ENCODE measurements at regions of chr12 and their contacts with region 1.

Region 1: DNA sequence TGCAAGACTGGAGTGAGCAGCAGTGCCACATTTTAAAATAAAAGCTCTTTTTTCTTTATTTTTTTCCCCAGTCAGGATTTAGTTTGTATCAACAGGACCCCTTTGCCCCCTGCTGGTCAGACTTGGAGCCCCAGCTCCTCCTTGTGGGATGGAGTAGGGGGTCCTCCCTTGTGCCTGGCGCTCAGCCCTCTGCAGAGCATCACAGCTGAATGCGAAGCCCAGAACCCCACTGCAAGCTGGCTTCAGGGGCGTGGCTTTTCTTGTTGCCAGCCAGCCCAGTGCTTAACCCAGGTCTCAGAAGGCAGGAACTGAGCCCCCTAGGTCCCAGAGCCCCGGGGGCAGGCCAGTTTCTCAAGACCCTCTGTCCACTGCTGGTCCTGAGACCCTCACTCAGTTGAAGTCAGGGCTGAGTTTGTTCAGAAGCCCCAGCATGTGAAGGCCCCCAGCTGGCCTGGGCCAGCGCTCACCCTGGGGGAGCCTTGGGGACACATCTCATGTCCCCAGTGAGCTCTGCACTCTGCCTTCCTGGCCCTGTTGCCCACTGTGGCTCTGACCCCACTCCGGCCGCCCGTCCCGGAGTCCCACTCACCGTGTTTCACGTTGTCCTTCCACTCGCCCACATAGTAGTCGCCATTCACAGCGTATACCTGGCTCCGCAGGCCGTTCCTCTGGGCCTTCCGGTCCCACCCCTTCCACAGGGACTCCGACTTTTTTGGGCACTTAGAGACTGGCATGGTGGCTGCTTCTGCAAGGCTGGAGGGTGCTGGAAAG is 519 bp downstream of the MORN3 start:
- DNase-seq: peak in 1 of 2 experiments; percentile 80
- H3K4me3 ChIP-seq: no peak overlapping the region
- H3K27ac ChIP-seq: no peak overlapping the region
- H3K4me1 ChIP-seq: peaks cover 0 to 18% (median 7%) of the 10 kb centered on the region in 4 experiments; a peak in 6 of 7 replicates
- H3K27me3 ChIP-seq: no peaks in the 10 kb centered on the region
- CTCF ChIP-seq: peak; percentile 52 to 62 (median 53)
- EP300 ChIP-seq: no peak
- POLR2A ChIP-seq: no peak
- RAD21 ChIP-seq: peak; percentile 52 to 70

Region 2: DNA sequence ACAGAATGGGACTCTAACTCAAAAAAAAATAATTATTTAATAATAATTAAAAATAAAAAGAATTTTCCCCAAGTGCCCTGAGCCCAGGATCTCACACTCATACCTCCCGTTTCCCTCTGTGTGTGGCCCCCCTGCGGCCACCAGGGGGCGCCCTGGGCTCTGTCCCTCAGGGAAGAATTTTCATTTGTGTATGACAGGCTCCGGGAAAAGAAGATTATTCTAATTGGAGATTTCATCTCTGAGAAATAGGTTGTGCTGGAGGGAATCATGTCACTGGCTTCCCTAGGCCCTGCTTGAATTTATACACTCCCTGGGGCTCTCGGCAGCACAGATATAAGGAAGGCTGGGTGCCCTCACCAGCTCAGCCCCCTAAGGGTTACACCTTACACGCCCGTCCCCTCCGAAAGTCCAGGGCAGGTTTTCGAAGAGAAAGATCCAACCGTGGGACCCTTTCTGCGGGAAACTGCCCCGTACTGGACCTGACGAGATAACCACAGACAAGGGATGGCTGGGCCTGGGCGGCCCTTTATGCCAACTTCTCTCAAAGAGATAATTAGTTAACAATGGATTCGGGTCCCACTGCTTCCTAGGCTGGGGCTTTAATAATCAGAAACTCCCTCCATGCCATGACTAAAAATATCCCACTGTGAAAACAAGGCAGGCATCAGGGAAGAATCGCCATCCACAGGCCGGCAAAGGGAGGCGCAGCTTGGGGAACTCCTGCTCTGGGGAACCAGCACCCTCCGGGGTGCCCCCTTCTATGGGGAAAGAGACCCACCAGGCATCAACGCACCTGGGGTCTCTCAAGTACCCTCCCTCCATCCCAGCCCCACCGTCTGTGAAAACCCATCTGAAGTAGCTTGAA is 168.8 kb before region 1 on chr12:
- CTCF ChIA-PET with region 1: interaction called, 13 read pairs
- POLR2A ChIA-PET with region 1: no interaction called
- DNase-seq: peak in 1 of 2 experiments; percentile 88
- H3K4me3 ChIP-seq: no peak overlapping the region
- H3K27ac ChIP-seq: 0 out of 2 replicates have a peak overlapping the region, but pooled peaks have one; percentile 16
- H3K4me1 ChIP-seq: no peaks in the 10 kb centered on the region
- H3K27me3 ChIP-seq: no peaks in the 10 kb centered on the region
- CTCF ChIP-seq: peak; percentile 63 to 84 (median 80)
- EP300 ChIP-seq: no peak
- POLR2A ChIP-seq: no peak
- RAD21 ChIP-seq: peak; percentile 49 to 63

Region 3: GRCh38 chr12:121637231-121637914 is 31.6 kb before region 1 on chr12:
- CTCF ChIA-PET with region 1: interaction called, 17 read pairs
- POLR2A ChIA-PET with region 1: interaction called, 4 read pairs
- DNase-seq: no peak
- H3K4me3 ChIP-seq: no peak overlapping the region
- H3K27ac ChIP-seq: no peak overlapping the region
- H3K4me1 ChIP-seq: peaks cover 2 to 10% (median 8%) of the 10 kb centered on the region in 4 experiments; a peak in 6 of 7 replicates
- H3K27me3 ChIP-seq: no peaks in the 10 kb centered on the region
- CTCF ChIP-seq: no peak
- EP300 ChIP-seq: no peak
- POLR2A ChIP-seq: no peak
- RAD21 ChIP-seq: no peak

Region 4: DNA sequence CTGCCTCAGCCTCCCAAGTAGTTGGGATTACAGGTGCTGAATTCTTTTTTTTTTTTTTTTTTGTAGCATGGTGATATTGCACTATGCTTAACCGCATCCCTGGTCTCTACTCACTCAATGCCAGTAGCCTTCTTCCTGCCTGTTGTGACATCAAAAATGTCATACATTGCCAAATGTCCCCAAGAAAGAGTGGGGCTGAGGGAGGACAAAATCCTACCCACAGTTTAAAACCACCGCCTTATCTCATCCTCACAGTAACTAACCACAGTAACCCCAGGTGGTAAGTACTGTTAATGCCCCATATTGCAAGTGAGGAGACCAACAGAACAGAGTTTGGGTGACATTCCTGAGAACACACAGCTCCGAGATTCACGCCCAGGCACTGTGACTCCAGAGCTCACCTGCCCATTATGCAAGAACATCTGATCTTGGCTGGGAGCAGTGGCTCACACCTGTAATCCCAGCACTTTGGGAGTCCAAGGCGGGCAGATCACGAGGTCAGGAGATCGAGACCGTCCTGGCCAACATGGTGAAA is 19.0 kb before region 1 on chr12:
- CTCF ChIA-PET with region 1: interaction called, 16 read pairs
- POLR2A ChIA-PET with region 1: interaction called, 4 read pairs
- DNase-seq: no peak
- H3K4me3 ChIP-seq: no peak overlapping the region
- H3K27ac ChIP-seq: no peak overlapping the region
- H3K4me1 ChIP-seq: peaks cover 0 to 5% (median 2%) of the 10 kb centered on the region in 4 experiments; a peak in 3 of 7 replicates
- H3K27me3 ChIP-seq: no peaks in the 10 kb centered on the region
- CTCF ChIP-seq: no peak
- EP300 ChIP-seq: no peak
- POLR2A ChIP-seq: no peak
- RAD21 ChIP-seq: no peak

Region 5: GRCh38 chr12:121688966-121689365 is 20.0 kb after region 1 on chr12:
- CTCF ChIA-PET with region 1: interaction called, 13 read pairs
- POLR2A ChIA-PET with region 1: interaction called, 6 read pairs
- DNase-seq: no peak
- H3K4me3 ChIP-seq: no peak overlapping the region
- H3K27ac ChIP-seq: no peak overlapping the region
- H3K4me1 ChIP-seq: peaks cover 0 to 3% (median 0%) of the 10 kb centered on the region in 4 experiments; a peak in 2 of 7 replicates
- H3K27me3 ChIP-seq: no peaks in the 10 kb centered on the region
- CTCF ChIP-seq: no peak
- EP300 ChIP-seq: no peak
- POLR2A ChIP-seq: no peak
- RAD21 ChIP-seq: no peak

Region 6: DNA sequence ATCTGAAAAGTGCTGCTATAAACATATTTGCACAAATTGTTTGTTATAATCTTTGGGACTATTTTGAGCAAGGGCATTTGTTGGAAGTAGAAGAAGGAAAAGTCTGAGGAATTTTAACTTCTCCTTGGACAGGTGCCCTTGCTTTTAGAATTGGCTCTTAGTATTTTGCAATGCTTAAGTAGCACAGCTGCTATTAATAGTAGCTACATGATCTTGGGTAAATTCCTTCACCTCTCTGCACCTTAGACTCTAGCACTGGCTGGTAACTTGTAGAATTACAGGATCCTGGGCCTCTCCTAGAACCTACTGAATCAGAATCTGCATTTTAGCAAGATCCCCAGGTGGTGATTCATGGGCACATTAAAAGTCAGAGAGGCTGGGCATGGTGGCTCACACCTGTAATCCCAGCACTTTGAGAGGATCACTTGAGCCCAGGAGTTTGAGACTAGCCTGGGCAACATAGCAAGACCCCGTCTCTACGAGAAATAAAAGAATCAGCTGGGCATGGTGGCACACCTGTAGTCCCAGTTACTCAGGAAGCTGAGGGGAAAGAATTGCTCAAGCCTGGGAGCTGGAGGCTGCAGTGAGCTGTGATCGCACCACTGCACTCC is 32.8 kb after region 1 on chr12:
- CTCF ChIA-PET with region 1: no interaction called
- POLR2A ChIA-PET with region 1: no interaction called
- DNase-seq: no peak
- H3K4me3 ChIP-seq: no peak overlapping the region
- H3K27ac ChIP-seq: no peak overlapping the region
- H3K4me1 ChIP-seq: no peaks in the 10 kb centered on the region
- H3K27me3 ChIP-seq: no peaks in the 10 kb centered on the region
- CTCF ChIP-seq: no peak
- EP300 ChIP-seq: no peak
- POLR2A ChIP-seq: no peak
- RAD21 ChIP-seq: no peak

Region 7: DNA sequence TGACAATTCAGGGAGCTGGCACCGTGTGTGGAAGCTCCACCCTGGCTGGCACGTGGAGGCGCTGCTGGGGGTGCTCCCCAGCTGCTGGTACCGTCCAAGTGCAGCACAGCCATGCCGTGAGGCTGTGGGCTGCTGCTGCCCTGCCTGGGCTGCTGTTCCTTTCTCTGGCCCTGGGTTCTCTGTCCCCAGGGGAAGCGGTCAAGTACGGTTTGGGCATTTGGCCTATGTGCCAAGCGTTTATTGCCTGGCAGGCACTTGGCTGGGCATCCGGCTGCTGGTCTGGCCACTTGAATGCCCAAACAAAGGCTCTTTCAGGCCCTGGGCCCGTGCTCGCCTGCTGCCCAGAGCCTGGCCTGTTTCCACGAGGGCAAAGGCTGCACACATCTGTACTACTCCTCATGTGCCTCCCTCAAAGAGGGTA is 84.9 kb after region 1 on chr12:
- CTCF ChIA-PET with region 1: no interaction called
- POLR2A ChIA-PET with region 1: no interaction called
- DNase-seq: no peak
- H3K4me3 ChIP-seq: no peak overlapping the region
- H3K27ac ChIP-seq: no peak overlapping the region
- H3K4me1 ChIP-seq: no peaks in the 10 kb centered on the region
- H3K27me3 ChIP-seq: no peaks in the 10 kb centered on the region
- CTCF ChIP-seq: no peak
- EP300 ChIP-seq: no peak
- POLR2A ChIP-seq: no peak
- RAD21 ChIP-seq: no peak